ENCODE measurements at regions of chr1 and their contacts with region 1.

Region 1: GRCh38 chr1:10494754-10495474 is 20.2 kb downstream of the PEX14 start:
- DNase-seq: peak; percentile 74
- H3K4me3 ChIP-seq: peak overlapping the region in 1 of 3 experiments; percentile 19
- H3K27ac ChIP-seq: peak overlapping the region; percentile 96
- H3K4me1 ChIP-seq: peaks cover 27% of the 10 kb centered on the region
- H3K27me3 ChIP-seq: no peaks in the 10 kb centered on the region
- CTCF ChIP-seq: peak; percentile 78 to 93

Region 2: DNA sequence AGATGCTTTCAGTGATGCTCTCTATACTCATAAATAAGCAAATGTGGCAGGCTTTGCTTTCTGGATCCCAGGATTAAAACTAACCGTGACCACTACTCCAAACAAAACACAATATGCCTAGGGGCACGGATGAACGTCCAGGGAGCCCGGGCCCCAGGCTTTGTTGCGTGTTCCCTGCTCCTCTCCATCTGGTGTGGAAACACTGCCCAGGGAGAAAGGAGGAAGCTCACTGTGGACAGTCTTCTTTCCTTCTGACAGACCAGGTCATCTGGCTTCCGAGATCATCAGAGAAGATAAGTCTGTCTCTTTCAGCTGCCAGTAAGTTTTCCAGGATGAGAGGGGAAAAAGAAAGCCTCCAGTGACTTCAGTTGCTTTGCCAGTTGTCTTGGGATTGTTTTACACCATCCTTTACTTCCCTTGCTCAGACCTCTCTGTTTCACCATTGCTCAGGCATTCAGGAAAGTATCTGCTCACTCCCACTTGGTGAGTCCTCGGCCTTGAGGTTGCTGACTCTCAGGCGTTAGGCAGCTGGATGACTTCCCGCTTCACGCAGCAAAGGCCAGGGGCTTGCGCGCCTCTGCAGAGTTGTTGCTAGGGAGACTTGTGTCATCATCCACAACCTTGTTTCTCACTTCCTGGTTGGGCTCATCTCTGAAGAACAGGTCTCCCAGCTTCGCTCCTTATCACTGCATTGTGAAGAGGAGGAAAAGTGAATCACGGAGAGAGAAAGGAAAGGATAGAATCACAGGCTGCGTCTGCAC is 116.7 kb before region 1 on chr1:
- CTCF ChIA-PET with region 1: no interaction called
- dilution Hi-C with region 1: no loop called
- in situ Hi-C with region 1: loop called in 1 of 2 experiments (anchors 10 kb)
- intact Hi-C with region 1: loop called (anchors 1 kb)
- DNase-seq: peak; percentile 14
- H3K4me3 ChIP-seq: no peak overlapping the region
- H3K27ac ChIP-seq: no peak overlapping the region
- H3K4me1 ChIP-seq: no peaks in the 10 kb centered on the region
- H3K27me3 ChIP-seq: no peaks in the 10 kb centered on the region
- CTCF ChIP-seq: no peak

Region 3: GRCh38 chr1:10459181-10459580 is 35.7 kb before region 1 on chr1:
- CTCF ChIA-PET with region 1: no interaction called
- dilution Hi-C with region 1: no loop called
- in situ Hi-C with region 1: no loop called
- intact Hi-C with region 1: loop called (anchors 1 kb)
- DNase-seq: peak; percentile 78
- H3K4me3 ChIP-seq: no peak overlapping the region
- H3K27ac ChIP-seq: no peak overlapping the region
- H3K4me1 ChIP-seq: peaks cover 30% of the 10 kb centered on the region
- H3K27me3 ChIP-seq: no peaks in the 10 kb centered on the region
- CTCF ChIP-seq: no peak

Region 4: GRCh38 chr1:10472220-10473144 is 22.4 kb before region 1 on chr1 and contains the start of gene DFFA:
- CTCF ChIA-PET with region 1: interaction called, 3 read pairs
- dilution Hi-C with region 1: no loop called
- in situ Hi-C with region 1: no loop called
- intact Hi-C with region 1: loop called (anchors 1 kb)
- DNase-seq: peak; percentile 94
- H3K4me3 ChIP-seq: peak within 1 kb of the TSS; percentile 70 to 80 (median 74)
- H3K27ac ChIP-seq: peak within 1 kb of the TSS; percentile 52
- H3K4me1 ChIP-seq: peaks cover 5% of the 10 kb centered on the region
- H3K27me3 ChIP-seq: no peaks in the 10 kb centered on the region
- CTCF ChIP-seq: no peak
- total RNA-seq, gene DFFA: 49.8 to 71.8 TPM

Region 5: GRCh38 chr1:10909697-10910671 is 415.1 kb after region 1 on chr1:
- CTCF ChIA-PET with region 1: interaction called, 19 read pairs
- dilution Hi-C with region 1: no loop called
- in situ Hi-C with region 1: no loop called
- intact Hi-C with region 1: loop called (anchors 1 kb)
- DNase-seq: peak; percentile 27
- H3K4me3 ChIP-seq: no peak overlapping the region
- H3K27ac ChIP-seq: no peak overlapping the region
- H3K4me1 ChIP-seq: peaks cover 9% of the 10 kb centered on the region
- H3K27me3 ChIP-seq: no peaks in the 10 kb centered on the region
- CTCF ChIP-seq: peak; percentile 41 to 79

Region 6: GRCh38 chr1:10941891-10942541 is 447.1 kb after region 1 on chr1:
- CTCF ChIA-PET with region 1: no interaction called
- dilution Hi-C with region 1: no loop called
- in situ Hi-C with region 1: no loop called
- intact Hi-C with region 1: loop called (anchors 1 kb)
- DNase-seq: no peak
- H3K4me3 ChIP-seq: no peak overlapping the region
- H3K27ac ChIP-seq: no peak overlapping the region
- H3K4me1 ChIP-seq: peaks cover 4% of the 10 kb centered on the region
- H3K27me3 ChIP-seq: no peaks in the 10 kb centered on the region
- CTCF ChIP-seq: peak; percentile 84 to 96

Measured in mammary epithelial cell (primary cell).